Naive thymus-derived CD4-positive, alpha-beta T cell (primary cell): ENCODE measurements at regions of chr12 and their contacts with region 1.

Region 1: GRCh38 chr12:96445691-96446583 is 43.4 kb upstream of the CFAP54 start:
- DNase-seq: peak in 8 of 9 donors; percentile 50 to 83 (median 78)
- ATAC-seq: peak; percentile 97
- H3K4me3 ChIP-seq: peak overlapping the region; percentile 10
- H3K4me3 Mint-ChIP-seq: peak overlapping the region; percentile 6 to 76 (median 63)
- H3K27ac ChIP-seq: peak overlapping the region; percentile 80
- H3K27ac Mint-ChIP-seq: peak overlapping the region; percentile 83 to 97 (median 92)
- H3K4me1 ChIP-seq: peaks cover 23 to 26% of the 10 kb centered on the region in 2 donors
- H3K4me1 Mint-ChIP-seq: peaks cover 17 to 55% (median 46%) of the 10 kb centered on the region in 7 donors
- H3K27me3 ChIP-seq: no peaks in the 10 kb centered on the region
- H3K27me3 Mint-ChIP-seq: no peaks in the 10 kb centered on the region

Region 2: GRCh38 chr12:96061864-96062453 is 384.0 kb before region 1 on chr12:
- CTCF ChIA-PET with region 1: no interaction called
- POLR2A ChIA-PET with region 1: no interaction called
- intact Hi-C with region 1: loop called in 1 of 2 experiments (anchors 1 kb)
- DNase-seq: peak; percentile 39 to 79 (median 70)
- ATAC-seq: peak; percentile 94
- H3K4me3 ChIP-seq: no peak overlapping the region
- H3K4me3 Mint-ChIP-seq: no peak overlapping the region
- H3K27ac ChIP-seq: no peak overlapping the region
- H3K27ac Mint-ChIP-seq: peak overlapping the region in 2 of 9 donors; percentile 1 to 28
- H3K4me1 ChIP-seq: peaks cover 0 to 12% of the 10 kb centered on the region in 2 donors
- H3K4me1 Mint-ChIP-seq: peaks cover 8 to 31% (median 30%) of the 10 kb centered on the region in 7 donors
- H3K27me3 ChIP-seq: no peaks in the 10 kb centered on the region
- H3K27me3 Mint-ChIP-seq: no peaks in the 10 kb centered on the region

Region 3: GRCh38 chr12:96375841-96376604 is 69.9 kb before region 1 on chr12:
- CTCF ChIA-PET with region 1: no interaction called
- POLR2A ChIA-PET with region 1: no interaction called
- intact Hi-C with region 1: loop called in 1 of 2 experiments (anchors 2 kb)
- DNase-seq: no peak
- ATAC-seq: no peak
- H3K4me3 ChIP-seq: no peak overlapping the region
- H3K4me3 Mint-ChIP-seq: peak overlapping the region; percentile 53 to 91 (median 64)
- H3K27ac ChIP-seq: peak overlapping the region; percentile 72
- H3K27ac Mint-ChIP-seq: peak overlapping the region in 8 of 9 donors; percentile 74 to 98 (median 96)
- H3K4me1 ChIP-seq: peaks cover 46 to 70% of the 10 kb centered on the region in 2 donors
- H3K4me1 Mint-ChIP-seq: peaks cover 59 to 94% (median 74%) of the 10 kb centered on the region in 7 donors
- H3K27me3 ChIP-seq: no peaks in the 10 kb centered on the region
- H3K27me3 Mint-ChIP-seq: no peaks in the 10 kb centered on the region

Region 4: DNA sequence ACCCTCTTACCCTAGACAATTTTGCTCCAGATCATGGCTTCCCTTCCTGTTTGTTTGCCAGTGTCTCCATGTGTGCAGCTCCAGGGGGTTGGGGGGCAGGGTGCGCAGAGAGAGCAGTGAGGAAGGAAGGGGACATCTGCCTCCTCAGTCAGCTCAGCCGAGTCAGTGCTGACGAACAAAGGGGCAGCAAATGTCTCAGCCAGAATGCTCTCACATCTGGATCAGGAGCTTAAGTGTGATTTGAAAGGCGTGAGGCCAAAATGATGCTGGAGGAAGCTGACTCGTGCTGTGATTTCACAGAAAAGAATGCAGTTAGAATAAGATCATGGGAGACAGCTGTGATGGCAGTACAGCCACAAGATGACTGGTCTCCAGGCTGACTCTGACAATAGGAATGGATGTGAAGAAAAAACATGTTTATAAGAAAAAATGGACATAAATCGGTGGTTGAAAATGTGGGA is 18.6 kb before region 1 on chr12:
- CTCF ChIA-PET with region 1: no interaction called
- POLR2A ChIA-PET with region 1: interaction called, 7 read pairs
- intact Hi-C with region 1: loop called in 1 of 2 experiments (anchors 2 kb)
- DNase-seq: peak in 1 of 9 donors; percentile 28
- ATAC-seq: no peak
- H3K4me3 ChIP-seq: no peak overlapping the region
- H3K4me3 Mint-ChIP-seq: peak overlapping the region in 1 of 10 donors; percentile 31
- H3K27ac ChIP-seq: no peak overlapping the region
- H3K27ac Mint-ChIP-seq: peak overlapping the region in 7 of 9 donors; percentile 13 to 81 (median 35)
- H3K4me1 ChIP-seq: no peaks in the 10 kb centered on the region
- H3K4me1 Mint-ChIP-seq: peaks cover 13 to 41% (median 21%) of the 10 kb centered on the region in 7 donors
- H3K27me3 ChIP-seq: no peaks in the 10 kb centered on the region
- H3K27me3 Mint-ChIP-seq: no peaks in the 10 kb centered on the region

Region 5: DNA sequence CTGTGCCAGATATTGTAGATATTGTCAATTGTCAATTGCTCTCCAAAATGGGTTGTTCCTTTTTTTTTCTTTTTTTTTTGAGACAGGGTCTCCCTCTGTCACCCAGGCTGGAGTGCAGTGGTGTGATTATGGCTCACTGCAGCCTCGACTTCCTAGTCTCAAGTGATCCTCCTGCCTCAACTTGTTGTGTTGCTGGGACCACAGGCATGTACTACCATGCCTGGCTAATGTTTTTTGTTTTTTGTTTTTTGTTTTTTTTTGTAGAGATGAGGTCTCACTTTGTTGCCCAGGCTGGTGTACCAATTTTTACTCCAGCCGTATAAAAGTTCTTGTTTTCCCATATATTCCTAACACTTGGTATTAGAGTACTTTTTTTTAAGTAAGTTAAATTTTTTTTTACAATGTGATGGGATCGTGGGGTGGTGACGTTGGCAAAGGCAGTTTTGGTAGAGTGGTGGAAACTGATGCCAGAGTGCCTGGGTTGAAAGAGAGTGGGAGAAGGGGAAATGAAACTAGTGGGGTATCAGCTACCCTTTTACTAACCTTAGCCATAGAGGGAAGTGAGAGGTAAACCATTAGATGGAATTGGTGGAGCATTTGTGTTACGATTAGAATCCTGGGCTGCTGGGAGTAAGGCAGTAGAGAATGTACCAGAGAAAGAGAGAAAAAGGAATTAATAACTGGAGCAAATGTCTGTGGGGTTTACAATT is 10.5 kb after region 1 on chr12:
- CTCF ChIA-PET with region 1: interaction called, 5 read pairs
- POLR2A ChIA-PET with region 1: interaction called, 3 read pairs
- intact Hi-C with region 1: loop called in 1 of 2 experiments (anchors 2 kb)
- DNase-seq: no peak
- ATAC-seq: peak; percentile 46
- H3K4me3 ChIP-seq: no peak overlapping the region
- H3K4me3 Mint-ChIP-seq: no peak overlapping the region
- H3K27ac ChIP-seq: no peak overlapping the region
- H3K27ac Mint-ChIP-seq: peak overlapping the region in 1 of 9 donors; percentile 59
- H3K4me1 ChIP-seq: no peaks in the 10 kb centered on the region
- H3K4me1 Mint-ChIP-seq: peaks cover 5 to 16% (median 9%) of the 10 kb centered on the region in 7 donors
- H3K27me3 ChIP-seq: no peaks in the 10 kb centered on the region
- H3K27me3 Mint-ChIP-seq: no peaks in the 10 kb centered on the region

Region 6: DNA sequence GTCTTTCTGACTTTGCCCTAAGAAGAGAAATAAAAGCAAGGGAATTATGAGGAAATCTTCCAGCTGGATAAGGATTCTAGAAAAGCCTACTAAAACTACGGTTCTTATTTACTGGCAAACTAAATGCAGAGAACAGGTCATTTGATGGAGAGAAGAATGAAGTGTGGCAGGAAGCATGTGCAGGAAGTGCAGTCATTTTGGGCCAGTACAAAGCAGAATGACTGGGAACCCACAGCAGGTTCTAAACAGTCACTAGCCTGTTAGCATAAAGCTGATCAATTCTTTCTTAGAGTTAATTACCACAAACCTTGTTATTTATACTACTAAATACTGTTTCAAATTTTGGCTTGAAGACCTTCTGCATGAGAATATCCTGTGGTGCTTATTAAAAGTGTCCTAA is 80.2 kb after region 1 on chr12:
- CTCF ChIA-PET with region 1: no interaction called
- POLR2A ChIA-PET with region 1: no interaction called
- intact Hi-C with region 1: no loop called
- DNase-seq: no peak
- ATAC-seq: no peak
- H3K4me3 ChIP-seq: no peak overlapping the region
- H3K4me3 Mint-ChIP-seq: no peak overlapping the region
- H3K27ac ChIP-seq: no peak overlapping the region
- H3K27ac Mint-ChIP-seq: no peak overlapping the region
- H3K4me1 ChIP-seq: no peaks in the 10 kb centered on the region
- H3K4me1 Mint-ChIP-seq: peaks cover 1 to 9% (median 6%) of the 10 kb centered on the region in 7 donors
- H3K27me3 ChIP-seq: no peaks in the 10 kb centered on the region
- H3K27me3 Mint-ChIP-seq: peaks cover 0 to 26% (median 0%) of the 10 kb centered on the region in 5 donors